K562 (cell line): ENCODE measurements at regions of chr1 and their contacts with region 1.

Region 1: GRCh38 chr1:33633019-33633801 is 160.8 kb downstream of the ZSCAN20 start:
- DNase-seq: peak; percentile 85 to 92 (median 90)
- ATAC-seq: peak; percentile 99
- H3K4me3 ChIP-seq: no peak overlapping the region
- H3K27ac ChIP-seq: no peak overlapping the region
- H3K4me1 ChIP-seq: peaks cover 0 to 7% of the 10 kb centered on the region in 2 experiments; a peak in 2 of 5 replicates
- H3K27me3 ChIP-seq: peaks cover 0 to 19% of the 10 kb centered on the region in 2 experiments; a peak in 2 of 5 replicates
- CTCF ChIP-seq: peak; percentile 99 to 100 (median 100)
- EP300 ChIP-seq: peak; percentile 5; the same call in 1 of the 2 replicates
- POLR2A ChIP-seq: no peak
- RAD21 ChIP-seq: peak; percentile 70 to 91

Region 2: GRCh38 chr1:33524586-33524985 is 108.6 kb before region 1 on chr1:
- CTCF ChIA-PET with region 1: no interaction called
- POLR2A ChIA-PET with region 1: no interaction called
- in situ Hi-C with region 1: no loop called
- intact Hi-C with region 1: no loop called
- DNase-seq: no peak
- ATAC-seq: no peak
- H3K4me3 ChIP-seq: no peak overlapping the region
- H3K27ac ChIP-seq: no peak overlapping the region
- H3K4me1 ChIP-seq: 0 out of 5 replicates have a peak, but pooled peaks cover 0 to under 1% of the 10 kb centered on the region in 2 experiments
- H3K27me3 ChIP-seq: peaks cover 12 to 27% of the 10 kb centered on the region in 2 experiments
- CTCF ChIP-seq: no peak
- EP300 ChIP-seq: no peak
- POLR2A ChIP-seq: no peak
- RAD21 ChIP-seq: no peak

Region 3: GRCh38 chr1:33709783-33710718 is 76.8 kb after region 1 on chr1:
- CTCF ChIA-PET with region 1: no interaction called
- POLR2A ChIA-PET with region 1: no interaction called
- in situ Hi-C with region 1: no loop called
- intact Hi-C with region 1: no loop called
- DNase-seq: no peak
- ATAC-seq: no peak
- H3K4me3 ChIP-seq: no peak overlapping the region
- H3K27ac ChIP-seq: no peak overlapping the region
- H3K4me1 ChIP-seq: no peaks in the 10 kb centered on the region
- H3K27me3 ChIP-seq: peaks cover 0 to 10% of the 10 kb centered on the region in 2 experiments; a peak in 1 of 5 replicates
- CTCF ChIP-seq: no peak
- EP300 ChIP-seq: no peak
- POLR2A ChIP-seq: no peak
- RAD21 ChIP-seq: no peak

Region 4: DNA sequence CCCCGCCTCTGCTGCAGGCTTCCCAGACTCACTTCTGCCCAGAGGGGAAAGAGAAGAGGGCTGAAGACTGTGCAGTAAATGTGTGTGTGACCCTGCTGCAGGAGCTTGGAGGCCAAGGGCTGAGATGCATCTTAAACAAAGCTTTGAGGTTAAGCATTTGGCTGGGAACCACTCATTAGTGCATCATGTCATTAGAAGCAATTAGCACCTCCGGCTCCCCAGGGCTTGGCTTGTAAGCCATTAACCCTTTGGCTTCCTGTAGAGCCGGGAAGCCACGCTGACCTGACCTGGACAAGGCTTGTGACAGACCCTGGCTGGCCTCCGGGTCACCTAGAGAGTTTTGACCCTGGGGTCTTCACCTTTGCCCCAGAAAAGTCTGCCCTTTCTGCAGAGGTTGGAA is 454.8 kb after region 1 on chr1:
- CTCF ChIA-PET with region 1: no interaction called
- POLR2A ChIA-PET with region 1: no interaction called
- in situ Hi-C with region 1: no loop called
- intact Hi-C with region 1: no loop called
- DNase-seq: no peak
- ATAC-seq: no peak
- H3K4me3 ChIP-seq: no peak overlapping the region
- H3K27ac ChIP-seq: no peak overlapping the region
- H3K4me1 ChIP-seq: no peaks in the 10 kb centered on the region
- H3K27me3 ChIP-seq: peaks cover 0 to 3% of the 10 kb centered on the region in 2 experiments; a peak in 1 of 5 replicates
- CTCF ChIP-seq: no peak
- EP300 ChIP-seq: no peak
- POLR2A ChIP-seq: no peak
- RAD21 ChIP-seq: no peak

Region 5: GRCh38 chr1:34597877-34598514 is 964.8 kb after region 1 on chr1:
- CTCF ChIA-PET with region 1: interaction called, 3 read pairs
- POLR2A ChIA-PET with region 1: no interaction called
- in situ Hi-C with region 1: loop called (anchors 10 kb)
- intact Hi-C with region 1: loop called (anchors 2 kb)
- DNase-seq: peak; percentile 72 to 78 (median 76)
- ATAC-seq: peak; percentile 95
- H3K4me3 ChIP-seq: no peak overlapping the region
- H3K27ac ChIP-seq: no peak overlapping the region
- H3K4me1 ChIP-seq: no peaks in the 10 kb centered on the region
- H3K27me3 ChIP-seq: no peaks in the 10 kb centered on the region
- CTCF ChIP-seq: peak; percentile 91 to 94 (median 93)
- EP300 ChIP-seq: no peak
- POLR2A ChIP-seq: no peak
- RAD21 ChIP-seq: peak; percentile 61 to 88

Region 6: DNA sequence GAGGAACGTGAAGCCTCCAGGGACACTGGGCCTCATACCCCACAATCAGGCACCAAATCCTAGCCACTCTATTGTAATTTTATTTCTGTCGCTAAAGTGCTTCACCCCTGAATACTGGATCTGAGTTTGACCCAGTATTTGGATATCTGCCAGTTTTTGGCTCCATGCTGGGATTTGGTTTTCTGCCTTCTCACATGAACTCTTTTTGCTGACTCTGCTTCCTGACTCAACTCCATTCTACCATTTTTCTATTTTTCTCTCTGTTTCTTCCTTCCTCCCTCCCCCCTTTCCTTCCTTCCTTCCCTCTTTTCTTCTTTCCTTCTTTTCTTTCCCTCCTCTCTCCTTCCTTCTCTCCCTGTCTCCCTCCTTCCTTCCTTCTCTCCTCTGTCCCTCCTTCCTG is 970.4 kb after region 1 on chr1:
- CTCF ChIA-PET with region 1: no interaction called
- POLR2A ChIA-PET with region 1: no interaction called
- in situ Hi-C with region 1: loop called (anchors 10 kb)
- intact Hi-C with region 1: loop called (anchors 2 kb)
- DNase-seq: no peak
- ATAC-seq: no peak
- H3K4me3 ChIP-seq: no peak overlapping the region
- H3K27ac ChIP-seq: no peak overlapping the region
- H3K4me1 ChIP-seq: no peaks in the 10 kb centered on the region
- H3K27me3 ChIP-seq: peaks cover 0 to 5% of the 10 kb centered on the region in 2 experiments; a peak in 2 of 5 replicates
- CTCF ChIP-seq: no peak
- EP300 ChIP-seq: no peak
- POLR2A ChIP-seq: no peak
- RAD21 ChIP-seq: no peak

Region 7: GRCh38 chr1:34742667-34743270 is 1109.6 kb after region 1 on chr1:
- CTCF ChIA-PET with region 1: interaction called, 12 read pairs
- POLR2A ChIA-PET with region 1: no interaction called
- in situ Hi-C with region 1: loop called (anchors 10 kb)
- intact Hi-C with region 1: loop called (anchors 2 kb)
- DNase-seq: peak; percentile 85 to 95 (median 91)
- ATAC-seq: peak; percentile 99
- H3K4me3 ChIP-seq: no peak overlapping the region
- H3K27ac ChIP-seq: no peak overlapping the region
- H3K4me1 ChIP-seq: no peaks in the 10 kb centered on the region
- H3K27me3 ChIP-seq: peaks cover 8 to 43% of the 10 kb centered on the region in 2 experiments; a peak in 4 of 5 replicates
- CTCF ChIP-seq: peak; percentile 95 to 96 (median 96)
- EP300 ChIP-seq: no peak
- POLR2A ChIP-seq: no peak
- RAD21 ChIP-seq: peak; percentile 82 to 94